Pancreas (tissue), 10 donors: ENCODE measurements at regions of chr12 and their contacts with region 1.

Region 1: GRCh38 chr12:80763874-80764273 is 47.2 kb downstream of the MYF5 start:
- DNase-seq: no peak
- ATAC-seq: peak in 3 of 4 donors; percentile 41 to 61 (median 52)
- H3K4me3 ChIP-seq: no peak overlapping the region
- H3K27ac ChIP-seq: no peak overlapping the region
- H3K4me1 ChIP-seq: no peaks in the 10 kb centered on the region
- H3K27me3 ChIP-seq: no peaks in the 10 kb centered on the region
- CTCF ChIP-seq: peak in 3 of 4 donors; percentile 12 to 44 (median 35)

Region 2: GRCh38 chr12:80406253-80406652 is 357.6 kb before region 1 on chr12:
- intact Hi-C with region 1: loop called in 2 of 3 experiments (anchors 5 to 10 kb)
- DNase-seq: no peak
- ATAC-seq: no peak
- H3K4me3 ChIP-seq: no peak overlapping the region
- H3K27ac ChIP-seq: no peak overlapping the region
- H3K4me1 ChIP-seq: no peaks in the 10 kb centered on the region
- H3K27me3 ChIP-seq: peaks cover 0 to 14% (median 0%) of the 10 kb centered on the region in 4 donors
- CTCF ChIP-seq: no peak

Region 3: DNA sequence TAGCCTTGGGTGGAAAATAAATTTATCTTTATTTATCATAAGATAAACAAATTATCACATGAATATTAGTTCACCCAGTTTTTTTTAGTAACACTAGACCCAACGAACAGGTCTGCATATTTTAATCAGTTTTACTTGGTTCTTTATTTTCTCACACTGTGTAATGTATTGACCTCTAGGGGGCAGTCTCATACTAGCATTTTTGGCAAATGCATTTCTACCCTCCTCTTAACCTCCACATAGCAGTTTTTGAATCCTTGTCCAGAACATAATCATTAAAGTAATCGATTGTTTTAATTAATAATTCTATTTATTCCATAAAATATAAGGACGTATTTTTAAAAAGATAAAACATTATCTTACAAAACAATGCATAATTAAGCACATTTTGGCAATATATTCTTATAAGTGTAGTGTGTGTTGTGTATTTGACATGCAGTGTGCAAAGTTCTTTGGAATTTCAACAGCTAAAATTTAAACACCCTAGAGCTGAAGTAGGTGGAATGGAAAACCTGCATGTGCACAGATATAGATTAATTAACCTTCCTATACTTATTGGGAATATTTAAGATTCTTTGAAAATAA is 351.4 kb before region 1 on chr12:
- intact Hi-C with region 1: loop called in 2 of 3 experiments (anchors 5 to 10 kb)
- DNase-seq: no peak
- ATAC-seq: peak in 3 of 4 donors; percentile 81 to 87 (median 86)
- H3K4me3 ChIP-seq: no peak overlapping the region
- H3K27ac ChIP-seq: no peak overlapping the region
- H3K4me1 ChIP-seq: no peaks in the 10 kb centered on the region
- H3K27me3 ChIP-seq: peaks cover 0 to 8% (median 0%) of the 10 kb centered on the region in 4 donors
- CTCF ChIP-seq: peak; percentile 48 to 77 (median 72)

Region 4: DNA sequence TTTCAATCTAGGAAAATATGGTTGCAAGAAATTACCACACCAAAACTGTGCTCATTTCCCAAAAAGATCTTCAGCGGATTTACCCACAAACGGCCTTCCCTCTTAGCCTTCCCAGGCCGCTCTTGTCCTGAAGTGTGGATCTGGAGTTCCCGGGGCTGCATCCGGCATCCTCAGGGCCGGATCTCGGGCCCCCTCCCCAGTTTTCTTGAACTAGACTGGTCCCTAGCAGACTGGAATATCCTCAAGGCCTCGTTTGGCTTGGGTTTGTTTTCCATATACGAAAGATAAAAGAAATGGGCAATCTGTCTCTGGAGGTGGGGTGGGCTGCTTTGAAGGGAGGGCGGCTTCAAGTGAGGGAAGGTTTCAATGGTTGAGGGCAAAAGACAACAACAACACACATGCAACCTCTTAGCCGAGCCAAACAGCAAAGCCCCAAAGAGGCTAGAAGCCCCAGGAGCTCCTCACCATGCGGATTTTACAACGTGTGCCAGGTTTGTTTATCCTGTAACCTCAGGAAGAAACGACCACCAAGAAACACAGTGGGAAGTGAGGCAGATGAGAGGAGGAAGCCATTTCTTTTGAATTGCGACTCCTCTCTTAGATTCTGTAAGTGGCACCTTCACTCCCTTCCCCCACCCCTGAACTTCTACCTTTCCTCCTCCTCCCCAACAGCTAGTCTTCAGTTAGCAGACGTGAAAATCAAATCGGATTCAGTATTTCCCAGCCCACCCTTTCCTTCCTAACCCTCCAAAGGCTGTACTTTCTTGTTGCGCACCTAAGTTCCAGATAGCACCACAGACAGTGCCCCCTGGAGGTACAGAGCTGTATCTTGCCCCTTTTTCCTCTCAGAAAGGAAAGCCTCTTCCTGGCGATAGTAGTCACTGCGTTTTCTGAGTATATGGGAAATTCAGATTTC is 53.8 kb before region 1 on chr12:
- intact Hi-C with region 1: no loop called
- DNase-seq: no peak
- ATAC-seq: peak in 1 of 4 donors; percentile 48
- H3K4me3 ChIP-seq: no peak overlapping the region
- H3K27ac ChIP-seq: no peak overlapping the region
- H3K4me1 ChIP-seq: no peaks in the 10 kb centered on the region
- H3K27me3 ChIP-seq: peaks cover 0 to 15% (median 1%) of the 10 kb centered on the region in 4 donors
- CTCF ChIP-seq: no peak